SK-N-SH (cell line): ENCODE measurements at regions of chr17 and their contacts with region 1.

Region 1: GRCh38 chr17:41811549-41812380 is at the start of gene P3H4:
- DNase-seq: peak; percentile 94
- H3K4me3 ChIP-seq: peak within 1 kb of the TSS; percentile 75 to 93
- H3K27ac ChIP-seq: peak within 1 kb of the TSS; percentile 80 to 87
- H3K4me1 ChIP-seq: peaks cover 15 to 24% of the 10 kb centered on the region in 2 experiments; a peak in 2 of 4 replicates
- H3K27me3 ChIP-seq: no peaks in the 10 kb centered on the region
- CTCF ChIP-seq: peak; percentile 61
- EP300 ChIP-seq: peak in 1 of 2 experiments; percentile 12; a peak in 1 of 4 replicates
- RAD21 ChIP-seq: peak; percentile 44; the same call in 1 of the 2 replicates
- polyA plus RNA-seq, gene P3H4: 55.5 and 88.3 TPM in 2 replicates

Region 2: DNA sequence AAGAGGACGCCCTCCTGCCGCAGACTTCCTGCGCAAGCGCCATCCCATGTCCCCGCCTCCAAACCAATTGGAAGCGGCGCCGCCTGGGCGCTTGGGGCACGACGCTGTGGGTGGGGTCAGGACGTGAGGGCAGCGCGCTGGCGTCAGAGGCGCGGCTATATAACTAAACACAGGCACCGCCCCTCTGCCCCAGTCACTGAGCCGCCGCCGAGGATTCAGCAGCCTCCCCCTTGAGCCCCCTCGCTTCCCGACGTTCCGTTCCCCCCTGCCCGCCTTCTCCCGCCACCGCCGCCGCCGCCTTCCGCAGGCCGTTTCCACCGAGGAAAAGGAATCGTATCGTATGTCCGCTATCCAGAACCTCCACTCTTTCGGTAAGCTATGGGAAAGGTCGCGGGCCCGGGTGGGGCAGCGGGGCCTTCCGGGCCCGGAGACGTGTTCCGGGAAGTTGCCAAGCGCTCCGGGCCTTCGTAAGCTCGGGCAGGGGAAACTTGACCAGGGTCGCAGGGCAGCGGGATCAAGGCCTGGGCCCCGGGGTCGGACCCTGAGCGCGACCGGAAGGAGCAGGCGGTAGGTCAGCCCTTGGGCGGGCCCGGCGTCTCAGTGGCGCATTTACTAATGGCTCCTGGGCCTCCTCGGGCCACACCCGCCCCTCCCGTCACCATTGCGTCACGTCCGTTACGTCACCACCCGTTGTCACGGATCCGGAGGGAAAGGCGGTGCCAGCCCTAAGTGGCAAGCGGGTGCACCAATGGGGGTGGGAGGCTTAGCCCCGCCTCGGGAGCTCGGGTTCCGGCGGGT is 122.9 kb before region 1 on chr17 and contains the start of gene EIF1:
- CTCF ChIA-PET with region 1: interaction called, 6 read pairs
- POLR2A ChIA-PET with region 1: interaction called, 11 read pairs
- DNase-seq: peak; percentile 96
- H3K4me3 ChIP-seq: peak within 1 kb of the TSS; percentile 75 to 92
- H3K27ac ChIP-seq: peak within 1 kb of the TSS; percentile 98 to 100
- H3K4me1 ChIP-seq: peaks cover 13 to 21% of the 10 kb centered on the region in 2 experiments
- H3K27me3 ChIP-seq: no peaks in the 10 kb centered on the region
- CTCF ChIP-seq: no peak
- EP300 ChIP-seq: no peak
- RAD21 ChIP-seq: no peak
- polyA plus RNA-seq, gene EIF1: 300 and 336 TPM in 2 replicates

Region 3: DNA sequence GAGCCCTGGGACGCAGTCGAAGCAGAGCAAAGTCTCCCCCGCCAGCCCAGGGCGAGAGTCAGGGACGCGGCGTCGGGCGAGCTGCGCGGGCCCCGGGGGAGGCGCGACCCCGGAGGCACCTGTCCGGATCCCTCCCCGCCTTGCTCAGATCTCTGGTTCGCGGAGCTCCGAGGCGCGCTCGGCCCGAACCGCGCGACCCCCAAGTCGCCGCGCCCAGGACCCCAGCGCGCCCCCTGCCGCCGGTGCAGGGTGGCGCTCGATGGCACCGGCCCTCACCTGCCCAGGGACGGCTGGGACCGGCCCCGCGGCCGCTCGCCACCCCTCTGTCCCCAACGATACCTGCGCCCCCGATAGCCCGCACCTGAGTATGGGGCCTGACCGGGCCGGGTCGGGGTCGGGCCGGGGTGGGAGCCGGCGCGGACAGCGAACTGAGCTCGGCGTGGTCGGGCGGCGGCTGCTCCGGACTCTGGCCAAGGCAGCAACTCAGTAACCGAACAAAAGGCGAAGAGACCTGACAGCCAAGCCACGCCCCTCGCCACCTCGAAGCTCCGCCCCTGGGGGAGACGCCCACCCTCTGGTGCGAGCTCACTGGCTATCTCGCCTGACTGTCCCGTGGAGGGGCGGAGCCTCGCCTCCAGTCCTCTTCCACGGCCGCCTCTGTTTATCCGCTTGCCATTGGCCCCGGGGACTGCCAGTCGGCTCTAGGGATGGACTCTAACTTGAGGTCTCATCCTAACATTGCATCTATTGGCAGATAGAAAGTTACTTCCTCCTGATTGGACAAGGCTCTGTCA is 25.3 kb before region 1 on chr17 and contains the start of gene JUP:
- CTCF ChIA-PET with region 1: interaction called, 19 read pairs
- POLR2A ChIA-PET with region 1: interaction called, 3 read pairs
- DNase-seq: peak; percentile 99
- H3K4me3 ChIP-seq: peak within 1 kb of the TSS; percentile 64 to 66
- H3K27ac ChIP-seq: peak within 1 kb of the TSS in 1 of 2 experiments; percentile 17; a peak in 1 of 4 replicates
- H3K4me1 ChIP-seq: peaks cover 10 to 32% of the 10 kb centered on the region in 2 experiments; a peak in 2 of 4 replicates
- H3K27me3 ChIP-seq: no peaks in the 10 kb centered on the region
- CTCF ChIP-seq: peak; percentile 63
- EP300 ChIP-seq: no peak
- RAD21 ChIP-seq: no peak
- polyA plus RNA-seq, gene JUP: 9.3 and 13.0 TPM in 2 replicates

Region 4: DNA sequence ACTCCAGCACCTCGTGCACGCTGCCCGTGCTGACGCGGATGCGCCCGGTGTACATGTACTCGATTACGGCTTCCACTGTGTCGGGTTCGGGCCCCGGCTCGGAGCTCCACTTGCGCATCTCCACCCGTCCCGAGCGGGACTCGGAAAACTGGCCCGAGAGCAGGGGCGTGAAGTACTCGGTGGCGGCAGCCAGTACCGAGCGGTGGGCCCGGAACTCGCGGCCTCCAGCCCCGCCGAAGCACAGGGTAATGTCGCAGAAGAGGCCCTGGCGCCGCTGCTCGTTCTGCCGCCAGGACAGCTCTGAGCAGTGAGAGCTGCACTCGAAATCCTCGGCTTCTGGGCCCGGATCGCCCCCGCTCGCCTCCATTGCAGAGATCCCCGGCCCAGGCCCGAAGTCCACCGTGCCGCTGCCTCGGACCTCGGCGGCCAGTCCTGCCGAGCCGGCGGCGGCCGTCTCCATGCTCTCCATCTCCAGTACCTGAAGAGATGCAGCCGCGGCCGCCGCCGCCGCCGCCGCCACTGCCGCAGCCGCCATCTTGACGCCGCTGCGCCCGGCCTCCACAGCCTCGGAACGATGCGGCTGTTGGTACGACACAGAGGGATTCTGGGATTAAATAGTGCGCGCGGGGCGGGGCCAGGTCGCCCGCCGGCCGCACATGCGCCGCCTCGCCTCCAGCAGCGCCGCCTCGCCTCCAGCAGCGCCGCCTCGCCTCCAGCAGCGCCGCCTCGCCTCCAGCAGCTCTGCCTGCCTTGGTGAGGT is 53.3 kb after region 1 on chr17 and contains the start of gene KLHL11:
- CTCF ChIA-PET with region 1: interaction called, 5 read pairs
- POLR2A ChIA-PET with region 1: interaction called, 12 read pairs
- DNase-seq: peak; percentile 96
- H3K4me3 ChIP-seq: peak within 1 kb of the TSS; percentile 91 to 95
- H3K27ac ChIP-seq: peak within 1 kb of the TSS; percentile 72 to 88
- H3K4me1 ChIP-seq: peaks cover 5 to 20% of the 10 kb centered on the region in 2 experiments; a peak in 2 of 4 replicates
- H3K27me3 ChIP-seq: no peaks in the 10 kb centered on the region
- CTCF ChIP-seq: no peak
- EP300 ChIP-seq: peak in 1 of 2 experiments; percentile 44; a peak in 1 of 4 replicates
- RAD21 ChIP-seq: no peak; the same call in 1 of the 2 replicates
- polyA plus RNA-seq, gene KLHL11: 2.6 and 3.0 TPM in 2 replicates